BJ (cell line): ENCODE measurements at regions of chr7 and their contacts with region 1.

Region 1: DNA sequence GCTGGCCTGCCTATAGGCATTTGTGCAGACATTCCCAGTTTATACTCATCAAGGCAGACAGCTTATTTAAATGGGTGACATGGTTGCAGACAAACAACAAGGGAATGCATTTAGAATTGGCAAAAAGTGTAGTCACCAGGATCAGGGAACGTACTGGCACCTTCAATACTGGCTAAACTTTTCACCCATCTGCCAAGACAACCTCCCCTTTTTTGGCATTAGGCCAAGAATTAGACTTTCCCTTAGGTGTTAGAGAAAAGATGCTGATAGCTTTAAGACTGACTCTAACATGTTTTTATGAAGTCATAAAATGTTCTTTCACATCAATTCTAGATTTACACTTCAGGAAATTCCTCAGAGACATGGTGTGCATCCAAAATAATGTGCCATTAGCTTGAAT is 365.9 kb downstream of the PHTF2 start:
- DNase-seq: no peak
- H3K4me3 ChIP-seq: no peak overlapping the region
- H3K27me3 ChIP-seq: no peaks in the 10 kb centered on the region
- CTCF ChIP-seq: no peak

Region 2: GRCh38 chr7:78176171-78176570 is 11.7 kb after region 1 on chr7:
- CTCF ChIA-PET with region 1: interaction called, 13 read pairs
- POLR2A ChIA-PET with region 1: no interaction called
- DNase-seq: no peak
- H3K4me3 ChIP-seq: no peak overlapping the region
- H3K27me3 ChIP-seq: no peaks in the 10 kb centered on the region
- CTCF ChIP-seq: no peak

Region 3: GRCh38 chr7:78323118-78323517 is 158.7 kb after region 1 on chr7:
- CTCF ChIA-PET with region 1: no interaction called
- POLR2A ChIA-PET with region 1: no interaction called
- DNase-seq: peak; percentile 60
- H3K4me3 ChIP-seq: no peak overlapping the region
- H3K27me3 ChIP-seq: no peaks in the 10 kb centered on the region
- CTCF ChIP-seq: no peak